ENCODE measurements at regions of chr19 and their contacts with region 1.

Region 1: GRCh38 chr19:17370026-17370587 is 7.0 kb downstream of the PLVAP start:
- DNase-seq: peak; percentile 41 to 81 (median 73)
- H3K4me3 ChIP-seq: peak overlapping the region in 3 of 7 experiments; percentile 6 to 57 (median 38)
- H3K27ac ChIP-seq: no peak overlapping the region
- H3K4me1 ChIP-seq: peaks cover 6 to 14% (median 10%) of the 10 kb centered on the region in 4 experiments
- H3K27me3 ChIP-seq: no peaks in the 10 kb centered on the region

Region 2: DNA sequence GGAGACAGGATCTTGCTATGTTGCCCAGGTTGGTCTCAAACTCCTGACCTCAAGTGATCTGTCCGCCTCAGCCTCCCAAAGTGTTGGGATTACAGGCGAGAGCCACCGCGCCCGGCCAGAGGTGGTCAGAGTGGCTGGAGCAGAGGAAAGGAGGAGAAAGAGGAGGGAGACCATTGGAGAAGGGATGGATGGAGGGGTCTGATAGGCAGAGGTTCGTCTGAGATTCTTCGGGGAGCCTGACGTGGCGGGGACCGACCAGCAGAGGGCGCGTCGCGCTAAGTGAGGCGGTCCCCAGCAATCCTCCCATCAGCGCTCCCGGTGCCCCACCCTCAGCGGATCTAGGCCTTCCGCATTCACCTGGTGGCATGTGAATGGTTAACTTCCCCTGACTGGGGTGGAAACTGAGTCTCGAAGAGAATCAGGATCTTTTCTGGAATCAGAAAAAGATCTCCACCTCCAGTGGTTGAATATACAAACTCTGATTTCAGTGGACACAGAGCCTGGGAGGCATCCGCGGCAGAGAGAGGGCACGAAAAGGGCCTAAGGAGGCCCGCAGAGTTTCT is 23.9 kb before region 1 on chr19:
- CTCF ChIA-PET with region 1: interaction called, 10 read pairs
- POLR2A ChIA-PET with region 1: interaction called, 3 read pairs
- DNase-seq: peak; percentile 60 to 69 (median 62)
- H3K4me3 ChIP-seq: no peak overlapping the region
- H3K27ac ChIP-seq: no peak overlapping the region
- H3K4me1 ChIP-seq: peaks cover 0 to 29% (median 21%) of the 10 kb centered on the region in 4 experiments
- H3K27me3 ChIP-seq: no peaks in the 10 kb centered on the region

Measured in common myeloid progenitor, CD34-positive (primary cell).